Caco-2 (cell line): ENCODE measurements at regions of chr19 and their contacts with region 1.

Region 1: GRCh38 chr19:56866538-56866937 is 26.0 kb upstream of the PEG3 start:
- DNase-seq: no peak
- H3K4me3 ChIP-seq: no peak overlapping the region
- H3K4me3 Mint-ChIP-seq: no peak overlapping the region
- H3K27ac Mint-ChIP-seq: no peak overlapping the region
- H3K4me1 ChIP-seq: no peaks in the 10 kb centered on the region
- H3K4me1 Mint-ChIP-seq: no peaks in the 10 kb centered on the region
- H3K27me3 ChIP-seq: no peaks in the 10 kb centered on the region
- H3K27me3 Mint-ChIP-seq: no peaks in the 10 kb centered on the region
- CTCF ChIP-seq: no peak

Region 2: DNA sequence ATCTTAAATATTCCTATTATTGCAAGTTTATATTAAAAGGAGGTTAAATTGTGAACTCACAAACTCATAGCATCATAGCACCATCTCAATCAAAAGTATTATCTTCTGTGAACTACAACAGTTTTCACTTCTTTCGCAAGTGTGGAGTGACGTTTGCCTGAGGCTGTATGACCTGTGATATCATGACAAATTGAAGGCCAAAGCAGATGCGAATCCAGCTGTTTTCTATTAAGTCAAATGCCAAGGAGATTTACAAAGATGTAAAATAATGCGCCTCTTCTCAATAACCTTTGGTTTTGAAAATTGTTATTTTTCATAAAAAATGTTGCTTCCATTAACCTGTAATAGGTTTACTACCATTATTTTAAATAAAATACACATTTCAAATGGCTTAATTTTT is 18.4 kb before region 1 on chr19:
- CTCF ChIA-PET with region 1: no interaction called
- POLR2A ChIA-PET with region 1: no interaction called
- intact Hi-C with region 1: no loop called
- DNase-seq: no peak
- H3K4me3 ChIP-seq: no peak overlapping the region
- H3K4me3 Mint-ChIP-seq: no peak overlapping the region
- H3K27ac Mint-ChIP-seq: no peak overlapping the region
- H3K4me1 ChIP-seq: no peaks in the 10 kb centered on the region
- H3K4me1 Mint-ChIP-seq: no peaks in the 10 kb centered on the region
- H3K27me3 ChIP-seq: no peaks in the 10 kb centered on the region
- H3K27me3 Mint-ChIP-seq: no peaks in the 10 kb centered on the region
- CTCF ChIP-seq: no peak

Region 3: GRCh38 chr19:56877069-56877715 is 10.7 kb after region 1 on chr19:
- CTCF ChIA-PET with region 1: no interaction called
- POLR2A ChIA-PET with region 1: no interaction called
- intact Hi-C with region 1: loop called (anchors 1 kb)
- DNase-seq: no peak
- H3K4me3 ChIP-seq: no peak overlapping the region
- H3K4me3 Mint-ChIP-seq: no peak overlapping the region
- H3K27ac Mint-ChIP-seq: no peak overlapping the region
- H3K4me1 ChIP-seq: no peaks in the 10 kb centered on the region
- H3K4me1 Mint-ChIP-seq: no peaks in the 10 kb centered on the region
- H3K27me3 ChIP-seq: no peaks in the 10 kb centered on the region
- H3K27me3 Mint-ChIP-seq: no peaks in the 10 kb centered on the region
- CTCF ChIP-seq: no peak